ENCODE measurements at regions of chr2 and their contacts with region 1.

Region 1: DNA sequence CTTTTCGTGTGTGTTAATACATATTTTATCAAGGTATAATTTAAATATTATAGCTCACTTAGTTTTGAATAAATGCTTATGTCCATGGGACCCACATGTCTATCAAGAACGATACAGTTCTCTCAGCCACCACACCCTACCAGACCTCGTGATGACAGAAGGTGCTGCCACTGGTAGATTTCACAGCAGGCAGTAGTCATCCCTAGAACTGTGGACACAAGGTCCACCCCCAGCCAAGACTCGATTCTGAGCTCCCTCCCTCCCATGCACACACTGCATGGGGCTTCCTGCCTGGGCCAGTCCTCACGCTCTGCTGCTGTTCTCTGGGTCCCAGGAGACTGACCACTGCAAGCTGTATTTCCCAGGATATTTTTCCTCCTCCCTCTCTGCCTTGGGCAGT is 26.5 kb upstream of the CREB1 start:
- DNase-seq: peak in 1 of 14 experiments; percentile 51
- ATAC-seq: no peak
- H3K4me3 ChIP-seq: no peak overlapping the region
- H3K4me3 Mint-ChIP-seq: no peak overlapping the region
- H3K27ac ChIP-seq: no peak overlapping the region
- H3K27ac Mint-ChIP-seq: no peak overlapping the region
- H3K4me1 ChIP-seq: peaks cover 21% of the 10 kb centered on the region
- H3K4me1 Mint-ChIP-seq: peaks cover 34% of the 10 kb centered on the region
- H3K27me3 ChIP-seq: no peaks in the 10 kb centered on the region
- H3K27me3 Mint-ChIP-seq: no peaks in the 10 kb centered on the region
- CTCF ChIP-seq: no peak

Region 2: DNA sequence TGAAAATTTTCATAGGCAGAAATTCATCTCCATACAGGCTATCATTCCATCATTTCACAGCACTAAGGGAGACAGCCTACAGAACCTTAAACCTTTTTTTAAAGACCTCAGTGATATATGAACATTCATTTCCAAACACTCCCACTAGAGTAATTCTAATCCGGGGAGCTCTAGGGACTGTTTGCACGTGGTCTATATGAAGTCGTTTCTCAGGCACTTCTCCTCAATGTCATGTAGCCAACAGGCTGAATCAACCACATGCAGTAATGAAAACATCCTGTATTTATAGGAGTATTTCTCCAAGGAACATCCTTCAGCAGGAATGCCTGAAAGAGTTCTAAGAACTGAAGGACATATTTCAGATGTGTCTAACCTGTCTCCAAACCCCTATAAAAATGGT is 70.8 kb before region 1 on chr2:
- CTCF ChIA-PET with region 1: no interaction called
- POLR2A ChIA-PET with region 1: no interaction called
- intact Hi-C with region 1: no loop called
- DNase-seq: no peak
- ATAC-seq: no peak
- H3K4me3 ChIP-seq: no peak overlapping the region
- H3K4me3 Mint-ChIP-seq: no peak overlapping the region
- H3K27ac ChIP-seq: no peak overlapping the region
- H3K27ac Mint-ChIP-seq: no peak overlapping the region
- H3K4me1 ChIP-seq: no peaks in the 10 kb centered on the region
- H3K4me1 Mint-ChIP-seq: no peaks in the 10 kb centered on the region
- H3K27me3 ChIP-seq: no peaks in the 10 kb centered on the region
- H3K27me3 Mint-ChIP-seq: no peaks in the 10 kb centered on the region
- CTCF ChIP-seq: no peak

Region 3: DNA sequence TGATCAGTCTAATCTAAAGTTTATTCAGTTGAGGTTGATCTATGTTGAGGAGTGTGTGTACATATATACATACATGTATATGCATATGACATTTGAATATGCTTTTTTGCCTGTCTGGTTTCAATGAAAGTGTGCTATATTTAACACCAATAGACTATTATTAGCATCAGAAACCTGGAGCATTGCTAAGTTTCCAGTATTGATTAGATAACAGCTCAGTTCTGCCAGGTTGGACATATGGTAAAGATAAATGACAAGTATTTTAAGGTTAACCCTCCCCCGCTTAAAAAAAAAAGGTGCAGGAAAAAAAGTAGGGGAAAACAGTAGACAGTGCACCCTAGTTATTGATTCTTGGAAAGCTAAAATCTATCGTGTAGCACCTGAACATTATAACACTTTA is 45.9 kb after region 1 on chr2:
- CTCF ChIA-PET with region 1: no interaction called
- POLR2A ChIA-PET with region 1: no interaction called
- intact Hi-C with region 1: no loop called
- DNase-seq: no peak
- ATAC-seq: no peak
- H3K4me3 ChIP-seq: no peak overlapping the region
- H3K4me3 Mint-ChIP-seq: no peak overlapping the region
- H3K27ac ChIP-seq: no peak overlapping the region
- H3K27ac Mint-ChIP-seq: peak overlapping the region; percentile 68
- H3K4me1 ChIP-seq: peaks cover 21% of the 10 kb centered on the region
- H3K4me1 Mint-ChIP-seq: peaks cover 72% of the 10 kb centered on the region
- H3K27me3 ChIP-seq: no peaks in the 10 kb centered on the region
- H3K27me3 Mint-ChIP-seq: no peaks in the 10 kb centered on the region
- CTCF ChIP-seq: no peak

Region 4: GRCh38 chr2:207769597-207770486 is 266.6 kb after region 1 on chr2 and contains the start of gene FZD5:
- CTCF ChIA-PET with region 1: no interaction called
- POLR2A ChIA-PET with region 1: no interaction called
- intact Hi-C with region 1: no loop called
- DNase-seq: peak; percentile 26 to 91 (median 58)
- ATAC-seq: peak; percentile 64
- H3K4me3 ChIP-seq: peak within 1 kb of the TSS; percentile 73
- H3K4me3 Mint-ChIP-seq: peak within 1 kb of the TSS; percentile 97
- H3K27ac ChIP-seq: no peak within 1 kb of the TSS
- H3K27ac Mint-ChIP-seq: peak within 1 kb of the TSS; percentile 39
- H3K4me1 ChIP-seq: peaks cover 40% of the 10 kb centered on the region
- H3K4me1 Mint-ChIP-seq: peaks cover 34% of the 10 kb centered on the region
- H3K27me3 ChIP-seq: peaks cover 15 to 20% of the 10 kb centered on the region in 2 experiments
- H3K27me3 Mint-ChIP-seq: peaks cover 48% of the 10 kb centered on the region
- CTCF ChIP-seq: peak; percentile 15
- total RNA-seq, gene FZD5: 0.19 to 0.25 TPM

Region 5: DNA sequence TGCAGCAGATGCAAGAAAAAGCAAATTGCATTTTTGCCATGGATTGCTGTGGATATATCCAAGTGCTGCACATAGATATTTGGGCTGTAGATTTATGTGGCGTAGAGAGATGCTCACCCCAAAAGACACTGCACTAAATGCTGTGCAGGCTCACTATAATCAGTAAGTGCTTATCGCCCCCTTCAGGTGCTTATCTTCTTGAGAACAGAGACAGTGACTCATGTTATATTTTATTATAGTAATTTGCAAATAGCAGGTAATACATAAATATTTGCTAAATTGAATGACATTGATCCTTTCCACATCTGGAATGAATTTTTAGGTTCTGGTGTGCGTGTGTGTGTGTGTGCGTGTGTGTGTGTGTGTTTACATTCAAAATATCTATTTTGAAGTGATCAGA is 558.9 kb after region 1 on chr2:
- CTCF ChIA-PET with region 1: no interaction called
- POLR2A ChIA-PET with region 1: no interaction called
- intact Hi-C with region 1: loop called in 1 of 2 experiments (anchors 10 kb)
- DNase-seq: peak in 4 of 14 experiments; percentile 13 to 38 (median 30)
- ATAC-seq: no peak
- H3K4me3 ChIP-seq: no peak overlapping the region
- H3K4me3 Mint-ChIP-seq: no peak overlapping the region
- H3K27ac ChIP-seq: no peak overlapping the region
- H3K27ac Mint-ChIP-seq: no peak overlapping the region
- H3K4me1 ChIP-seq: no peaks in the 10 kb centered on the region
- H3K4me1 Mint-ChIP-seq: no peaks in the 10 kb centered on the region
- H3K27me3 ChIP-seq: no peaks in the 10 kb centered on the region
- H3K27me3 Mint-ChIP-seq: peaks cover 5% of the 10 kb centered on the region
- CTCF ChIP-seq: peak; percentile 15

Measured in CD4-positive, alpha-beta T cell (primary cell).